Left colon (tissue), 2 donors: ENCODE measurements at regions of chr4 and their contacts with region 1.

Region 1: DNA sequence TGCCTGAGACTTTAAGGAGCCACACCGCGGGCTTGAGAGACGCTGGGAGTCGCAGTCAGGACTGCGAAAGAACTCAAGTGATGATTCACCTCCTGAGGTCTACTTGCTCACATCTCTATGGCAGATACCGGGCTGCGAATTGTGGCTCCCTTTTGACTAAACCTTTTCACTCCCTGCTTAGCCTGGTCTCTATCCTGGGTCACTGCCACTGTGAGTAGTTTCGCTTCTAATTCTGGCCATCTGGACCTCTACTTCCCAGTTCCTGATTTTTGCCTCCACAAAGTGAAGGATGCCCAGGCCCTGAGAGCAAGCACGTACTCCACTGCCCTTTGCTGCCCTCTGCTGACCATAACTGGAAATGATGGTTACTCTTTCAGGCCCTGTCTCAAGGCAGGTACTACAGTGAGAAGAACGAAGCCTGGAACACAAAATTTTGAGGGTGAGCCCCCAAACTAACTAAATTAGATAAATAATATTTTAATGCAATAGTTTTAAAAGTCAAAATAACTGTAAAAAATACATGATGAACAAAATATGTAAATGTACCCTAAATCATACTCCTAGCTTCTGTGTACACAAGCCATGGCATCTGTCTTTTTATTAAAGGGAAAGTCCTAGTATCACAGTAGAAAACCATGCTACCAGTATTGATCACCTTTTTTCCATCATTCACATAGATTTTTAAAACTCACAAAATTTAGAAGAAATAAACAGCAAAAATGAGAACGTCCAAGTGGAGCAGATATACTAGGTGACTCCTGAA is 16.7 kb downstream of the MAD2L1 start:
- DNase-seq: peak; percentile 69 to 79
- ATAC-seq: peak; percentile 96

Region 2: GRCh38 chr4:119300101-119300978 is 749.6 kb before region 1 on chr4:
- intact Hi-C with region 1: loop called in 1 of 2 experiments (anchors 10 kb)
- DNase-seq: peak; percentile 97 to 98
- ATAC-seq: peak; percentile 95

Region 3: GRCh38 chr4:119559044-119559647 is 490.8 kb before region 1 on chr4:
- intact Hi-C with region 1: loop called in 1 of 2 experiments (anchors 10 kb)
- DNase-seq: no peak
- ATAC-seq: peak; percentile 46

Region 4: GRCh38 chr4:119632216-119632615 is 417.7 kb before region 1 on chr4:
- intact Hi-C with region 1: loop called in 1 of 2 experiments (anchors 5 kb)
- DNase-seq: no peak
- ATAC-seq: no peak

Region 5: DNA sequence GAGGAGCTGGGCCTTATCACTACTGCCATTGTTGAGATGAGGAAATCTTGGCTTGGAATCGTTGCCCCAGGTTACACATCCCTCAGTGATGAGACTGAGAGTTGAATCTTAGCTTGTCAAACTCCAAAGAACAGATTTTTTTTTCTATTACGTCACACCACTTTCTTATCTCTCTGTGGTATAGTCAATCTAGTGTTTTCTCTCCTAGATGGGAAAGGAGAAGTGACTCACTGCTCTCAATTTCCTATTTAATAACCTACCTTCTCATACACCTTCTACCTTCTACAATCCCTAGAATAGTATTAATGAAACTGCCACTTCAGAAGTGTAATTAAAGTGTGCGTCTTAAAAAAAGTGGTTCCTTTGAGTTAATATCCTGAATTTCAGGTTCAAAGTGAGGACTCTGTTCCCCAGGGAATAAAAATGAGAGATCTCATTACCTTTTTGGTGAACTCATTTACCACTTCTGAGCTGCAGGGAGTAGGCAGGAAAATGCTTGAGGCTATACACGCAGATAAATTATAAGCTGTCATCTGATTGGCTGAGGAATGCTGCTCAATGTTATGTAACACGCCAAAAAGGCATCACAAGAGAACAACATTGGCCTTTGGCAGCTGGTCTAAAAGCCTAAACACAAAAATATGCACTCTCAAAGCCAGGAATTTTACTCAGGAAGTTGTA is 42.6 kb before region 1 on chr4:
- intact Hi-C with region 1: no loop called
- DNase-seq: no peak
- ATAC-seq: no peak

Region 6: GRCh38 chr4:120163895-120164294 is 114.0 kb after region 1 on chr4:
- intact Hi-C with region 1: no loop called
- DNase-seq: no peak
- ATAC-seq: no peak

Region 7: GRCh38 chr4:120524237-120524636 is 474.3 kb after region 1 on chr4:
- intact Hi-C with region 1: no loop called
- DNase-seq: no peak
- ATAC-seq: no peak